ENCODE measurements at regions of chr17 and their contacts with region 1.

Region 1: DNA sequence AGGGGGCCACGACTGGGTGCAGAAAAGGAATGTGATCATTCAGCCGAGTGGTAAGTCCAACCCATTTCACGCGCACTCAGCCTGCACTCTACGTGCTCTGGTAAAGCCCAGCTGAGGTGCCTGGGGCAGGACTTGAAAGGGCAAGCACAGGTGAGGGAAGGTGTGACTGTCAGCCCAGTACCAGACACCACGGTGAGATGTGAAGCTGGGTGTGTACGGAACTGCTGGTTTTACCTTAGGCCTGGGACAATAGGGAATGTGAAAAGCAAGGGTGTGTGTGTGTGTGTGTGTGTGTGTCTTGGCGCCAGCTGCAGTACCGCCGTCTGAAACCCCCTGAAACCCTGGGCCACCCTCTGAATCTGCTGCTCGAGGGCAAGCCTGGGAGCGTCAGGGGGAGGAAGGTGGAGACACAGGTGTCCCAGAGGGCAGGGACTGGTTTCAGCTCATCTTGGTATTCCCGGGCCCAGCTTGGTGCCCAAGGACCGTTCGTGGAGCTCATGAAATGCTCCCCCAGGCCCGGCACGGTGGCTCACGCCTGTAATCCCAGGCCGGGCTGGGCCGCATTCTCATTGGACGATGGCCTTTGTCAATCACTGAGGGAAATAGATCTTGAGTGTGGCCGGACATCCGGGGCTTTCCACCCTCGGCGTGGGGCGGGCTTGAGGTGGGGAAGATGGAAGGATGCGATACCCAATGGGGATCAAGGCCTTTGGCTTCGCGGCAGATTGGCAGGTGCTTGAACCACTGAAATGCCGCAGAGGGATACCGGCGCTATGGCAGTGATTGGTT is 27.8 kb upstream of the ST6GALNAC1 start:
- DNase-seq: peak; percentile 99
- H3K4me3 ChIP-seq: peak overlapping the region; percentile 69 to 70
- H3K27ac ChIP-seq: peak overlapping the region in 1 of 2 experiments; percentile 94; a peak in 3 of 4 replicates
- H3K4me1 ChIP-seq: peaks cover 0 to 33% of the 10 kb centered on the region in 2 experiments; a peak in 2 of 4 replicates
- H3K27me3 ChIP-seq: no peaks in the 10 kb centered on the region
- CTCF ChIP-seq: no peak
- EP300 ChIP-seq: no peak; a peak in 1 of 4 replicates
- RAD21 ChIP-seq: no peak

Region 2: DNA sequence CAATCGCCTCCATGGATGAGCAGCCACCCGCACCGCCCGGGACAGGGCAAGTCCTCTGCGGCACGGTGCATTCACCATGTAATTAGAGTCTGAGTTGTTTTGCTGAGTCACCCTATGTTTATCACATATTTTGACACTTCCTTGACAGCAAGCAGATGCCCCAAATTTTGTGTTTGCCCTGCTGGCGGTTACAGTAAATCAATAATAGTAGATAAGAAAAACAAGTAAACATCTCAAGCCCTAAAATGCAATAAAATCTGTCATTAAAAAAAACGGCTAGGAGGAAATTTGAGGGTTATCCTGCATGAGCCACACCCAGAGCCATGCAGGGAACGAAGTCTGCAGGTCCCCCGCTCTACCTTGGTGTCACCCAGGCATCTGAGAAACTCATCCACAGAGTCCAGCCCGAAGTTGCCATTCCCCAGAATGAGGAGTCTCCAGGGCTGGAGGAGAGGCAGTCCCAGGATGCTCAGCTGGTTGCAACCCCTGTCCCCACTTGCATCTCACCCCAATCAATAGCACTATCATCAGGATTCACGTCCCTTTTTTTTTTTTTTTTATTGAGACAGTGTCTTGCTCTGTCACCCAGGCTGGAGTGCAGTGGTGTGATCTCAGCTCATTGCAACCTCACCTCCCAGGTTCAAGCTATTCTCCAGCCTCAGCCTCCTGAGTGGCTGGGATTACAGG is 11.2 kb before region 1 on chr17:
- CTCF ChIA-PET with region 1: interaction called, 5 read pairs
- POLR2A ChIA-PET with region 1: interaction called, 11 read pairs
- DNase-seq: peak; percentile 73
- H3K4me3 ChIP-seq: no peak overlapping the region
- H3K27ac ChIP-seq: no peak overlapping the region
- H3K4me1 ChIP-seq: peaks cover 0 to 10% of the 10 kb centered on the region in 2 experiments; a peak in 1 of 4 replicates
- H3K27me3 ChIP-seq: no peaks in the 10 kb centered on the region
- CTCF ChIP-seq: no peak
- EP300 ChIP-seq: peak in 1 of 2 experiments; percentile 63; a peak in 1 of 4 replicates
- RAD21 ChIP-seq: peak; percentile 14; the same call in 1 of the 2 replicates

Region 3: DNA sequence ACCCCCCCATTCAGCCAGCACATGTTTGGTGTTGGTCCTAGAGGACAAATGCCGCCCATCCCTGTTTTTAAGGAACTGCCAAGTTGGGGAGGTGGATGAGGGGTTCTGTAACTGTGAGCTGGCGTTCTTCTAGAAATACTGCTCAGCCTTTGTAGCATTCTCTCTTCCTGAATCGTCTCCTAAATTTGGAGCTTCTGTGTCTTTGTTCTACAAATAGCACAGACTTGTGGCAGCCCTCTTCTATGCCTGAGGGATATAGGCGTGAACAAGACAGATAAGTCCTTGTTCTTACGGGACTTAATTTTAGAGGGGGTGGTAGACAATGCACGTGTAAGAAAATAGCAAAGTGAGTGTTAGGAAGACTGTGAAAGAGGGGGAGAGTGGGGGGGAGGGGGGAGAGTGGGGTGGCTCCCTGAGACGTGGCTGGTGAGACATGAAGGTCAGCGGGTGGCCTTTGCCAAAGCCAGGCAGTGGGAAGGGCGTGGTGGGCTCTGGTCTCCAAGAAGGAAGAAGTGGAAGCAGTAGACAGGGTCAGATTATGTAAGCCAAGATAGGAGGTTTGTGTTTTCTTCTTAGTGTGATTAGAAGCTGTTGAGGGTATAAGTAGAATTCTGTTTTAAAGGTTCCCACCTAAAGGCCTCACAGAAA is 76.5 kb after region 1 on chr17:
- CTCF ChIA-PET with region 1: no interaction called
- POLR2A ChIA-PET with region 1: no interaction called
- DNase-seq: no peak
- H3K4me3 ChIP-seq: no peak overlapping the region
- H3K27ac ChIP-seq: no peak overlapping the region
- H3K4me1 ChIP-seq: no peaks in the 10 kb centered on the region
- H3K27me3 ChIP-seq: no peaks in the 10 kb centered on the region
- CTCF ChIP-seq: no peak
- EP300 ChIP-seq: no peak
- RAD21 ChIP-seq: no peak